Activated CD8-positive, alpha-beta T cell treated with anti-CD3 and anti-CD28 coated beads, Interleukin-2, amount 10 ng/mL, durations not matched to agents 7 days and 5 days (primary cell): ENCODE measurements at regions of chr4 and their contacts with region 1.

Region 1: GRCh38 chr4:26885912-26886274 is 25.3 kb downstream of the STIM2 start:
- DNase-seq: peak; percentile 70
- ATAC-seq: peak; percentile 68
- H3K4me3 Mint-ChIP-seq: peak overlapping the region; percentile 67
- H3K27ac Mint-ChIP-seq: peak overlapping the region; percentile 90
- H3K4me1 Mint-ChIP-seq: peaks cover 79% of the 10 kb centered on the region
- H3K27me3 Mint-ChIP-seq: no peaks in the 10 kb centered on the region

Region 2: GRCh38 chr4:26709246-26709645 is 176.6 kb before region 1 on chr4:
- CTCF ChIA-PET with region 1: no interaction called
- POLR2A ChIA-PET with region 1: no interaction called
- DNase-seq: no peak
- ATAC-seq: no peak
- H3K4me3 Mint-ChIP-seq: no peak overlapping the region
- H3K27ac Mint-ChIP-seq: no peak overlapping the region
- H3K4me1 Mint-ChIP-seq: no peaks in the 10 kb centered on the region
- H3K27me3 Mint-ChIP-seq: no peaks in the 10 kb centered on the region

Region 3: GRCh38 chr4:26826721-26827120 is 59.2 kb before region 1 on chr4:
- CTCF ChIA-PET with region 1: no interaction called
- POLR2A ChIA-PET with region 1: no interaction called
- DNase-seq: no peak
- ATAC-seq: no peak
- H3K4me3 Mint-ChIP-seq: no peak overlapping the region
- H3K27ac Mint-ChIP-seq: no peak overlapping the region
- H3K4me1 Mint-ChIP-seq: peaks cover 10% of the 10 kb centered on the region
- H3K27me3 Mint-ChIP-seq: no peaks in the 10 kb centered on the region

Region 4: GRCh38 chr4:26873391-26874026 is 12.4 kb before region 1 on chr4:
- CTCF ChIA-PET with region 1: interaction called, 30 read pairs
- POLR2A ChIA-PET with region 1: interaction called, 64 read pairs
- DNase-seq: peak; percentile 78
- ATAC-seq: peak; percentile 92
- H3K4me3 Mint-ChIP-seq: peak overlapping the region; percentile 55
- H3K27ac Mint-ChIP-seq: peak overlapping the region; percentile 89
- H3K4me1 Mint-ChIP-seq: peaks cover 66% of the 10 kb centered on the region
- H3K27me3 Mint-ChIP-seq: no peaks in the 10 kb centered on the region

Region 5: DNA sequence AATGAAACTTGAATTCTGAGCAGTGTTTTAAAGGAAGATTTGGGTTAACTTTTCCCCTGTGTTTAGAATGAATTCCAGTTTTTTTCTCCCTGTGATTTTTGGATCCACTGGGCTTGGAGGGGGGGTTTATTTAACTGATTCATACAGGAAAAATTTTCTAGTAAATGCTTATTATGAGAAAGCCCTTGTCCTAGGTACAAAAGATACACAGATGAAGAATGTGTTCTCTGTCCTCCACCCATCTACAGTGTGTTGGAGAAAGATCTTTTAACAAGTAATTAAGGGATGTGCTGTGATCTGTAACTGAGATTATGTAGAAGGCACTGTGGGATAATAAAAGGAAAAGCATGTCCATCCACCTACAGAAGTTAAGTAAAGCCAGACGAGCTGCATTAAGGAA is 78.6 kb after region 1 on chr4:
- CTCF ChIA-PET with region 1: no interaction called
- POLR2A ChIA-PET with region 1: no interaction called
- DNase-seq: no peak
- ATAC-seq: no peak
- H3K4me3 Mint-ChIP-seq: no peak overlapping the region
- H3K27ac Mint-ChIP-seq: no peak overlapping the region
- H3K4me1 Mint-ChIP-seq: peaks cover 8% of the 10 kb centered on the region
- H3K27me3 Mint-ChIP-seq: no peaks in the 10 kb centered on the region

Region 6: DNA sequence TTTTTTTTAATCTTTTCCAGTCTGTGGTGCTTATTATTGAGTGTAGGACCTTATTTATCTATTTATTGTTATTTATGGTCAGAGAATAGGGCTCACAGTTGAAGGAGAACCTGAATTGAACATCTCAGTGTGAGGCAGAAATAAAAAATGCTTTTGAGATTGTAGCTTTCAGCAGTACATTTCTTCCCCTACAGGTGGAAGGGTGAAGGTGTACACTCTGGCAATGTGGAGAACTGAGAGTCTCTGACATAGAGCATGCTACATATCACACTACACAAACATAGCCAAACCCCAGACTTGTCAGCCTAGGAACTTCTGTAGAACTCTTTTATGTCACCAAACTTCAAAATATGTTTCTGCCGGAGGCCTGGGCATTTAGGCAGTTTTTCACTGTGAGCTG is 114.9 kb after region 1 on chr4:
- CTCF ChIA-PET with region 1: interaction called, 24 read pairs
- POLR2A ChIA-PET with region 1: no interaction called
- DNase-seq: no peak
- ATAC-seq: peak; percentile 83
- H3K4me3 Mint-ChIP-seq: no peak overlapping the region
- H3K27ac Mint-ChIP-seq: no peak overlapping the region
- H3K4me1 Mint-ChIP-seq: peaks cover 33% of the 10 kb centered on the region
- H3K27me3 Mint-ChIP-seq: no peaks in the 10 kb centered on the region